Motor neuron (in vitro differentiated cells): ENCODE measurements at regions of chr15 and their contacts with region 1.

Region 1: GRCh38 chr15:45611305-45611704 is 23.5 kb upstream of the SQOR start:
- ATAC-seq: no peak
- H3K4me3 ChIP-seq: no peak overlapping the region
- H3K27ac ChIP-seq: no peak overlapping the region
- H3K4me1 ChIP-seq: no peaks in the 10 kb centered on the region

Region 2: DNA sequence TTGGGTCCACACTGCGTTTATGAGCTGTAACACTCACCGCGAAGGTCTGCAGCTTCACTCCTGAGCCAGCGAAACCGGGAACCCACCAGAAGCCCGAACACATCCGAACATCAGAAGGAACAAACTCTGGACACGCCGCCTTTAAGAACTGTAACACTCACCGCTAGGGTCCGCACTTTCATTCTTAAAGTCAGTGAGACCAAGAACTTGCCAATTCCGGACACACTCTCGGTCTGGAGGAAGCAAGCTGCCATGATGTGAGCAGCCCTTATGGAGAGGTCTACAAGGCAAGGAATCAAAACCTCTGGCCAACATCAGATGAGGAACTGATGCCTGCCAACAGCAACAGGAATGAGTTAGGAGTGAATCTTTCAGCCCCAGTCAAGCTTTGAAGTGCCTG is 296.3 kb before region 1 on chr15:
- in situ Hi-C with region 1: no loop called
- ATAC-seq: peak in 3 of 8 experiments; percentile 30 to 95 (median 78)
- H3K4me3 ChIP-seq: no peak overlapping the region
- H3K27ac ChIP-seq: no peak overlapping the region
- H3K4me1 ChIP-seq: no peaks in the 10 kb centered on the region

Region 3: DNA sequence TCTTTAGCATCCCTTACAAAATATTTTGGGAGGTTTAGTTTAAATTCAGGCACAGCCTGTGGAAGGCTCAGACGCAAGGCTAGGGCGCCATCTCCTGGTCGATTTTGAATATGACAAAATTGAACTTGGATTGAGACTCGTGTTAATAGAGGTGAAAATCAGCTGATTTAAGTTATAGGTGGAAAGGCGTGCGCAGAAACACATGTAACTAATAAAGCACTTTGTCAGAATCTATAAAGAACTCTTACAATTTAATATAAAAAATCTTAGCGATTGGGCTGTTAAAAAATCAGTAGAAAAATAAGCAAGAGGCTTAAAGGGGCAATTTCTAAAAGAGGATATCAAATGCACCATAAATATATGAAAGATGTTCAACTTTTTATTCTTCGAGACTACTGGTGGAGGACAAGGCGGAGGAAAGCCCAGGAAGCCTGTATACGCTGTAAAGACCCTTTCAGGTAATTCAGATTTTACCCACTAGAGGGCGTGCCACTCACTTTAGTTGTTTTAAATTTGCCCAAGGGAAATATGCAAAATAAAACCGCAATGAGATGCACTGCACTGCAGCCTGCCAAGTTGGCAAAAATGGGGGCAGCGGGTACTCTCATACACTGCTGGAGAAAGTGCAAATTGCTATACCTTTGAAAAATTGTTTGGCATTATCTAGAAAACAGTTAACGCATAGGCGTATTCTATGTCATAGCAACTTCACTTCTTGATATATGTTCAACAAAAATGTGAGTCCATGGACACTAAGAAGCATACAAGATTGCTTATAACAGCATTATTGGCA is 153.5 kb before region 1 on chr15:
- in situ Hi-C with region 1: loop called in 2 of 9 experiments (anchors 10 to 25 kb)
- ATAC-seq: peak; percentile 27 to 82 (median 74)
- H3K4me3 ChIP-seq: peak overlapping the region; percentile 15 to 22 (median 20)
- H3K27ac ChIP-seq: no peak overlapping the region
- H3K4me1 ChIP-seq: peaks cover 0 to under 1% of the 10 kb centered on the region in 2 donors

Region 4: GRCh38 chr15:45468294-45468693 is 143.0 kb before region 1 on chr15:
- in situ Hi-C with region 1: loop called in 2 of 9 experiments (anchors 10 to 25 kb)
- ATAC-seq: peak in 3 of 8 experiments; percentile 12 to 75 (median 74)
- H3K4me3 ChIP-seq: no peak overlapping the region
- H3K27ac ChIP-seq: no peak overlapping the region
- H3K4me1 ChIP-seq: peaks cover 3 to 6% of the 10 kb centered on the region in 2 donors